Calu3 (cell line): ENCODE measurements at regions of chr1 and their contacts with region 1.

Region 1: DNA sequence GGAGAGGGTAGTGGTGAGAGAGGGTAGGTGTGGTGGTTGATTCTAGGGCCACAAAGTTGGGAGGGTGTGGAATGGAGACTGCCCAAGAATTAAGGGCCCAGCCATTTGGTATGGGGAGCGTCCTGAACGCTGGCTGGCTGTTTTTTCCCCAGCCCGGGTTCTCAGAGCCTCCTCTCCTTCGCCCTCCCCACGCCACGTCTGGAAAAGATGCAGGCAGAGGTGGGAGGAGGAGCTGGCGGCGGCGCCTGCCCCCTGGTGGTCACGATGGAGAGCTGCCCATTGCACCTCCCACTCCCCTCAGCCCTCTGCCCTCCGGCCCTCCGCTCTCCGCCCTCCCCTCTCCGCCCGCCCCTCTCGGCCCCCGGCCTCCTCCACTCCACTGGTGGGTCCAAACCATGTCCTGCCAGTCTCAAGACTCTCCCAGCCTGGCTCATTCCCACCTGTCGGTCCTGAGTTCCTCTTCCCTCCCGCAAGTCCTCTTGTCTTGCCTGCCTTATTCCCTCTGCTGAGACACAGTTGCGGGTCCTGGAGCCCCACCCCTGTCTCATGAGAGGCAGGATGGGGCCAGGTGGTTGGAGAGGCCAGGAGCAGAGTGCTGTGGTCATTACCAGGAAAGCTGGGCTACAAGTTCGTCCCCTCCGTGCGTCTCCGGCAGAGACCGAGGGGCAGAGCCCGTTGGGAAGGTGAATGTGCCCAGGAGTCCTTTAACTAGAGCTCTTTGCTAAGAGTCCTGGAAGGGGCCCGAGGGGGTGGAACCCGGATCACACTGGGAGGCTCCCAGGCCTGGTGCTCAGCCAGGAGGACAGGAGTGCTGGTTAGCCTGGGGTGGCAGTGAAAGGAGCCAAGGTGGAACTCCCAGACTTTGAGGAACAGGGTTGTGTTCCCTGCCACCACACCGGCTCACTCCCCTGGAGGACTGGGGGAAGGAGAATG is 22.6 kb downstream of the ETNK2 start:
- DNase-seq: peak; percentile 83
- H3K4me3 Mint-ChIP-seq: peak overlapping the region; percentile 69
- H3K27ac Mint-ChIP-seq: peak overlapping the region; percentile 73
- H3K4me1 Mint-ChIP-seq: peaks cover 40% of the 10 kb centered on the region
- H3K27me3 Mint-ChIP-seq: no peaks in the 10 kb centered on the region
- CTCF ChIP-seq: peak; percentile 98

Region 2: GRCh38 chr1:203861379-203862184 is 267.6 kb before region 1 on chr1 and contains the start of gene SNRPE:
- CTCF ChIA-PET with region 1: interaction called, 30 read pairs
- intact Hi-C with region 1: loop called (anchors 1 kb)
- DNase-seq: peak; percentile 98
- H3K4me3 Mint-ChIP-seq: peak within 1 kb of the TSS; percentile 99
- H3K27ac Mint-ChIP-seq: peak within 1 kb of the TSS; percentile 98
- H3K4me1 Mint-ChIP-seq: peaks cover 22% of the 10 kb centered on the region
- H3K27me3 Mint-ChIP-seq: no peaks in the 10 kb centered on the region
- CTCF ChIP-seq: peak; percentile 90
- total RNA-seq, gene SNRPE: 195 and 224 TPM in 2 replicates

Region 3: GRCh38 chr1:203871107-203871875 is 257.9 kb before region 1 on chr1:
- CTCF ChIA-PET with region 1: interaction called, 113 read pairs
- intact Hi-C with region 1: loop called (anchors 1 kb)
- DNase-seq: peak; percentile 52
- H3K4me3 Mint-ChIP-seq: no peak overlapping the region
- H3K27ac Mint-ChIP-seq: no peak overlapping the region
- H3K4me1 Mint-ChIP-seq: no peaks in the 10 kb centered on the region
- H3K27me3 Mint-ChIP-seq: no peaks in the 10 kb centered on the region
- CTCF ChIP-seq: peak; percentile 91

Region 4: DNA sequence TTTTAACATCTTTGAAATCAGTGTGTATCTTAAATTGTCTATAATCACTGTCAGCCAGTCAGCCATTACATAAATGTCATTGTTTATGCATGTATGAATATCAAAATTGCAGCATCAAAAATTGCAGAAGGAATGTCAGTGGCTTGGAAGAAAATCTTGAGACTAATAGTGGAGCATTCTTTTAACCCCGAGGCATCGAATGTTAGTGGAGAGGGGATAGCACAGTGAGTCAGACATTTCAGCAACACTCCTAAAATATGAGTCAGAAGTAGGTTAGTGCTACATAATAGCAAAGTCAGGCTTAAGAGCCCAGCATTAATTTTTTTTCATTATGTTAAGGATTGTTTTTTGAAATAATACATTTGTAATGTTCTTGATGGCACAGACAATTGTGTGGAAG is 222.3 kb before region 1 on chr1:
- CTCF ChIA-PET with region 1: interaction called, 3 read pairs
- intact Hi-C with region 1: loop called (anchors 1 kb)
- DNase-seq: peak; percentile 31
- H3K4me3 Mint-ChIP-seq: no peak overlapping the region
- H3K27ac Mint-ChIP-seq: no peak overlapping the region
- H3K4me1 Mint-ChIP-seq: peaks cover 29% of the 10 kb centered on the region
- H3K27me3 Mint-ChIP-seq: no peaks in the 10 kb centered on the region
- CTCF ChIP-seq: no peak

Region 5: DNA sequence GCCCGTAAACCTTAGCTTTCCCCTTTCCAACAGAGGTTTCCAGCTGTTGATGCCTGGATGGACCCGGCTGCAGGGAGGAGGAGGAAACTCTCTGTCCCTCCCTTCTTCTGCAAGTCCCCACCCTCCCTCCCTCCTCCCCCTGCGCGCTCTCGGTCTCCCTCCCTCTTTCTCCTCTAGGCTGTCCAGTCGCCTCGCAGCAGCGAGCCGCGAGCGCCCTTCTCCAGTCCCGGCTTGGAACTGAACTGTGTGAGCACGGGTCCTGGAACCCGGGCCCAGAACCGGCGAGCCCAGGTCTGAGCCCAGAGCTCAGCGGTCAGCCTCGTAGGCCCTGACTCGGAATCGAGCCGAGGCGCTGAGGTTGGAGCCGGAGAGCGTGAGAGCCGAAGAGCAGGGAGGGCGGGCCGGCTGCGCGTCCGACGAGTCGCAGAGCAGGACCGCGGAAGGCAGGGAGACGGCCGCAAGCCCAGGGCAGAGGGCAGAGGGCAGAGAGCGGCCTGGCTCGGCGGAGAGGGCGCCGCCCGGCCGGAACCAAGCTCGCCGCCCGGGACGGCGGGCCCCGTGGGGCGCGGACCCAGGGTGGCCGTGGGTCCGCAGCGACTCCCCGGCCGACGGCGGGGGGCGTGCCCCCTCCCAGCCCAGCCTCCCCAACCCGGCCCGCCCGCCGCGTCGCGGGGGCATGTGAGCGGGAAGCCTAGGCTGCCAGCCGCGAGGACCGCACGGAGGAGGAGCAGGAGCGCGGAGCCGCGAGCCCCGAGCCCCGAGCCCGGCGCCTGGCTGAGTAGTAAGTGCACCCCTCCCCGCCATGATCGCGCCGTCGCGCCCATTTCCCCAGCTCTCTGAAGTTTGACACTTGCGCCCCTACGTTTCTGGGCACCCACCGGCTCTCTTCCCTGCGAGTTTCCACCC is 56.0 kb before region 1 on chr1 and contains the start of gene SOX13:
- CTCF ChIA-PET with region 1: interaction called, 19 read pairs
- intact Hi-C with region 1: loop called (anchors 1 kb)
- DNase-seq: peak; percentile 82
- H3K4me3 Mint-ChIP-seq: peak within 1 kb of the TSS; percentile 84
- H3K27ac Mint-ChIP-seq: peak within 1 kb of the TSS; percentile 55
- H3K4me1 Mint-ChIP-seq: peaks cover 28% of the 10 kb centered on the region
- H3K27me3 Mint-ChIP-seq: peaks cover 5% of the 10 kb centered on the region
- CTCF ChIP-seq: no peak
- total RNA-seq, gene SOX13: 21.8 and 27.9 TPM in 2 replicates

Region 6: GRCh38 chr1:204331847-204332487 is 202.7 kb after region 1 on chr1:
- CTCF ChIA-PET with region 1: interaction called, 11 read pairs
- intact Hi-C with region 1: no loop called
- DNase-seq: peak; percentile 56
- H3K4me3 Mint-ChIP-seq: peak overlapping the region; percentile 69
- H3K27ac Mint-ChIP-seq: peak overlapping the region; percentile 72
- H3K4me1 Mint-ChIP-seq: peaks cover 29% of the 10 kb centered on the region
- H3K27me3 Mint-ChIP-seq: no peaks in the 10 kb centered on the region
- CTCF ChIP-seq: no peak